PC-3 (cell line): ENCODE measurements at regions of chr2 and their contacts with region 1.

Region 1: DNA sequence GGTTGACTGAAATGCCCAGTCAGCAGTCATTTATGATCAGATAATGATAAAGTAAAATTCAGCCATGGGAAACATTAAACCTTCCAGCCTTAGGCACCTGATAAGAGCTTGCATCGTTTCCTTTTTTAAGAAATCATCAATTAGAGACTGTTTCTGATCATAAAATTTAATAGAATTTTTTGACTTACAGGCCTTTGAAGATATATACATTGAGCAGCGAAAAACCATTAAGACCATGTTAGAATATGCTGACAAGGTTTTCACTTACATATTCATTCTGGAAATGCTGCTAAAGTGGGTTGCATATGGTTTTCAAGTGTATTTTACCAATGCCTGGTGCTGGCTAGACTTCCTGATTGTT is 99.6 kb upstream of the CSRNP3 start:
- DNase-seq: no peak
- ATAC-seq: no peak
- H3K4me3 ChIP-seq: no peak overlapping the region
- H3K27ac ChIP-seq: no peak overlapping the region
- H3K4me1 ChIP-seq: no peaks in the 10 kb centered on the region
- H3K27me3 ChIP-seq: 0 out of 2 replicates have a peak, but pooled peaks cover 6% of the 10 kb centered on the region
- CTCF ChIP-seq: no peak

Region 2: GRCh38 chr2:165087933-165088901 is 281.7 kb before region 1 on chr2:
- CTCF ChIA-PET with region 1: no interaction called
- POLR2A ChIA-PET with region 1: no interaction called
- intact Hi-C with region 1: no loop called
- DNase-seq: no peak
- ATAC-seq: no peak
- H3K4me3 ChIP-seq: no peak overlapping the region
- H3K27ac ChIP-seq: no peak overlapping the region
- H3K4me1 ChIP-seq: no peaks in the 10 kb centered on the region
- H3K27me3 ChIP-seq: no peaks in the 10 kb centered on the region
- CTCF ChIP-seq: no peak; the same call in 1 of the 2 replicates

Region 3: GRCh38 chr2:165274698-165275097 is 95.2 kb before region 1 on chr2:
- CTCF ChIA-PET with region 1: no interaction called
- POLR2A ChIA-PET with region 1: no interaction called
- intact Hi-C with region 1: no loop called
- DNase-seq: no peak
- ATAC-seq: no peak
- H3K4me3 ChIP-seq: no peak overlapping the region
- H3K27ac ChIP-seq: no peak overlapping the region
- H3K4me1 ChIP-seq: no peaks in the 10 kb centered on the region
- H3K27me3 ChIP-seq: no peaks in the 10 kb centered on the region
- CTCF ChIP-seq: no peak

Region 4: GRCh38 chr2:165357758-165358157 is 12.2 kb before region 1 on chr2:
- CTCF ChIA-PET with region 1: no interaction called
- POLR2A ChIA-PET with region 1: no interaction called
- intact Hi-C with region 1: no loop called
- DNase-seq: peak; percentile 83
- ATAC-seq: peak; percentile 98
- H3K4me3 ChIP-seq: no peak overlapping the region
- H3K27ac ChIP-seq: no peak overlapping the region
- H3K4me1 ChIP-seq: peaks cover 12% of the 10 kb centered on the region
- H3K27me3 ChIP-seq: no peaks in the 10 kb centered on the region
- CTCF ChIP-seq: no peak

Region 5: GRCh38 chr2:165847001-165847400 is 477.1 kb after region 1 on chr2:
- CTCF ChIA-PET with region 1: no interaction called
- POLR2A ChIA-PET with region 1: interaction called, 12 read pairs
- intact Hi-C with region 1: no loop called
- DNase-seq: peak; percentile 28
- ATAC-seq: no peak
- H3K4me3 ChIP-seq: no peak overlapping the region
- H3K27ac ChIP-seq: no peak overlapping the region
- H3K4me1 ChIP-seq: no peaks in the 10 kb centered on the region
- H3K27me3 ChIP-seq: no peaks in the 10 kb centered on the region
- CTCF ChIP-seq: peak; percentile 44; the same call in 1 of the 2 replicates